Heart left ventricle (tissue), 16 donors: ENCODE measurements at regions of chr2 and their contacts with region 1.

Region 1: DNA sequence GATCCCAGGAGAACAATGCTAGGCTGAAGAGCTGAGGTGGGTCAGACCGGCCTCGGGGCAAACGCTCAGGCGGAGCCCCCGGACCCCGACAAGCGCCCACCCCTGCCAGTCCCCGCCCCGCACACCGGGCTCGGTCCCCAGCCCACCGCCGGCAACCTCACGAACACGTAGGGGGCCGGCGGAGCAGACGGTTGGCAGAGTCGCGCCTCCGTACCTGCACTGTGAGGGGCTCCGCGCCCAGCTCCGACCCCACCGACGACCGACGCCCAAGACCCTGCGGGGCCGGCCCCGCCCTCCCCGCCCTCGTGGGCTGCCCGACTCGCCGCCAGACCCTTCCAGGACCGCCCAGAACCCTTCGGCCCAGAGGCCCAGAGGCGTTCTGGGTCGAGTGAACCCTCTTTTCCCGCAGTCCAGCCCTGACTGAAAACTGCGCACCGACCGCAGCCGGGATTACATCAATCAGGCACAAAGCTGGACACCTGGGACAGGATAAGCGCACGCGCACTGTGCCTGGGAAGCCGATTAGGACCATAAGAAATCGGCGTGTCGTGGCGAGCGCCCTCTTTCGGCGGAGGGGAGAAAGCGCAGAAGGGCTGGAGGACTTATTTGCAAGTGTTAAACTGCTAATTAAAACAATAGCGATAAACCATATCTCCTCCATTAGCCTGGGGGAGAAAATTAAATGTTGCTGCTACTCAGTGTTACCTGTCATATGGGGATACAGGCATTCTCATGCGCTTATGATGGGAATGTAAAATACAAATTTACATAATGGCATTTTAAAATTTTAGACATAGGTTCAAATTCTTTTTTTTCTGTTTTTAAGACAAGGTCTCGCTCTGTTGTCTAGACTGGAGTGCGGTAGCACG is 11.7 kb upstream of the DCTN1 start:
- DNase-seq: peak; percentile 92 to 98 (median 93)
- ATAC-seq: peak; percentile 72 to 87 (median 86)
- H3K4me3 ChIP-seq: peak overlapping the region; percentile 75 to 99 (median 87)
- H3K27ac ChIP-seq: peak overlapping the region; percentile 88 to 98 (median 93)
- H3K4me1 ChIP-seq: peaks cover 0 to 48% (median 41%) of the 10 kb centered on the region in 12 donors
- H3K27me3 ChIP-seq: no peaks in the 10 kb centered on the region
- CTCF ChIP-seq: peak; percentile 94 to 99 (median 98)
- POLR2A ChIP-seq: peak in 1 of 2 donors; percentile 57

Region 2: GRCh38 chr2:74250189-74250631 is 141.6 kb before region 1 on chr2:
- intact Hi-C with region 1: loop called in 1 of 10 experiments (anchors 5 kb)
- DNase-seq: peak in 2 of 5 donors; percentile 31 to 50
- ATAC-seq: peak in 2 of 4 donors; percentile 38 to 51
- H3K4me3 ChIP-seq: no peak overlapping the region
- H3K27ac ChIP-seq: no peak overlapping the region
- H3K4me1 ChIP-seq: peaks cover 0 to 13% (median 2%) of the 10 kb centered on the region in 12 donors
- H3K27me3 ChIP-seq: no peaks in the 10 kb centered on the region
- CTCF ChIP-seq: peak; percentile 62 to 87 (median 74)
- POLR2A ChIP-seq: no peak

Region 3: GRCh38 chr2:74261204-74261864 is 130.5 kb before region 1 on chr2:
- intact Hi-C with region 1: loop called in 2 of 10 experiments (anchors 10 kb)
- DNase-seq: peak in 4 of 5 donors; percentile 34 to 53 (median 40)
- ATAC-seq: peak; percentile 43 to 80 (median 68)
- H3K4me3 ChIP-seq: no peak overlapping the region
- H3K27ac ChIP-seq: peak overlapping the region in 1 of 12 donors; percentile 27
- H3K4me1 ChIP-seq: peaks cover 0 to 3% (median 0%) of the 10 kb centered on the region in 12 donors
- H3K27me3 ChIP-seq: no peaks in the 10 kb centered on the region
- CTCF ChIP-seq: peak; percentile 29 to 71 (median 49)
- POLR2A ChIP-seq: no peak

Region 4: DNA sequence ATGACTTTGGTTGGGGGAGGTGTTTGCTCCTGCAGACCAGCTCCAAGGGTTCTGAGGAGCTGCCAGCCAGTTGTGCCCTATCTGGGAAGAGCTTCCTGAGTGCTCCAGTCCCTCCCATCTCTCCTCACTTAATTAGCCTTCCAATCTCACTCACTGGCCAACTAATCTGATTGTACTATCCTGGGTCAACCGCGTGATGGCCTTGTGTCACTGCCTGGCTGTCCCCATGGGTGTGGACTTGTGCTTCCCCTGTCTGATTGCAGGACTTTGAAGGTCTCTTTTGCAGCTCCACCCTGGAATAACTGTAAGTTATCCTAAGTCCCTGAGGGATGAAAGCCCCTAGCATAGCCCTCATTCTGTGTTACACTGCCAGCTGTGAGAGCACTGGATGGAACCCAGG is 113.6 kb before region 1 on chr2:
- intact Hi-C with region 1: loop called in 1 of 10 experiments (anchors 10 kb)
- DNase-seq: no peak
- ATAC-seq: peak in 3 of 4 donors; percentile 39 to 66 (median 55)
- H3K4me3 ChIP-seq: no peak overlapping the region
- H3K27ac ChIP-seq: no peak overlapping the region
- H3K4me1 ChIP-seq: peaks cover 0 to 7% (median 0%) of the 10 kb centered on the region in 12 donors
- H3K27me3 ChIP-seq: no peaks in the 10 kb centered on the region
- CTCF ChIP-seq: no peak
- POLR2A ChIP-seq: no peak